Activated CD4-positive, alpha-beta T cell treated with anti-CD3 and anti-CD28 coated beads for 36 hours (primary cell): ENCODE measurements at regions of chr3 and their contacts with region 1.

Region 1: DNA sequence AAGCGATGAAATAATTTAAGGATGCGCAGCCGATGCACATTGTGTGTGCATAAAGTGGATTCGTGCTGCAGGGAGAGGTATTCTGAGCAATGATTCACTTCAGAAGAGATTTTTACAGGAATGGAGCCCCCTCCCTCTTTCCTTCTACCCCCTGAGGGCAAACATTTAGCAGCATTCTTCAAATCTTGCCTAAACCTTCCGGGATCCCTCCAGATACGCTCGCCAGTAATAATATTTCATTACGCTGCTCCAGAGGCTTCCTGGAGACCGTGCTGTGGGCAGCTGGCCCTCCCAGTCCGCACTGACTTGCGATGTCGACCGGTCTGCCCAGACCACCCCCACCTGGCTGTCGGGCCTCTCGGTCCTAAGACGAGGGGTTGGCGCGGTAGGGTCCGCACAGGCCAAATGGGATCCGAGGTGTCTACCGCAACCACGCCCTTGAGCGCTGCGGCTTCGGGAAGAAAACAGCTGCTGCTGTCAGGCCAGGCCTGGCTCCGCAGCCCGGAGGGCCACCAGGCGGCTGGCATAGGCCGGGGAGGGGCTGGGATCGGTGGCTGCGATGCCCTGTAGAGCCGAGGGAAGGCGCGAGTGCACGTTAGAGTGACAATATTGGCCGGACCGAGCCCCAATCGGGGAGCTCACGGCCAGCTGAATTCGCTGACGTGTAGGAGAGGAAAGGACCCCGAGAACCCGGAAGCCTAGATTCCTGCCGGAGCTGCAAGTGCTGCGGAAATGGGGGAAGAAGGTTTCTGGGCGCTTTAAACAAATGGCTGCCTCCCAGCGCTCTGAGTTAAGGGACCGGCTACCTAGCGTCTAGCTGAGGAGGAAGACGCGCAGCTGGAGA is 14.3 kb downstream of the ZIC4 start:
- DNase-seq: no peak
- ATAC-seq: no peak
- H3K4me3 Mint-ChIP-seq: no peak overlapping the region
- H3K27ac Mint-ChIP-seq: no peak overlapping the region
- H3K4me1 Mint-ChIP-seq: no peaks in the 10 kb centered on the region
- H3K27me3 Mint-ChIP-seq: peaks cover 78% of the 10 kb centered on the region

Region 2: GRCh38 chr3:147361454-147362420 is 30.3 kb before region 1 on chr3:
- CTCF ChIA-PET with region 1: no interaction called
- POLR2A ChIA-PET with region 1: no interaction called
- intact Hi-C with region 1: loop called in 1 of 2 experiments (anchors 5 kb)
- DNase-seq: peak; percentile 78
- ATAC-seq: no peak
- H3K4me3 Mint-ChIP-seq: no peak overlapping the region
- H3K27ac Mint-ChIP-seq: no peak overlapping the region
- H3K4me1 Mint-ChIP-seq: peaks cover 5% of the 10 kb centered on the region
- H3K27me3 Mint-ChIP-seq: peaks cover 57% of the 10 kb centered on the region

Region 3: DNA sequence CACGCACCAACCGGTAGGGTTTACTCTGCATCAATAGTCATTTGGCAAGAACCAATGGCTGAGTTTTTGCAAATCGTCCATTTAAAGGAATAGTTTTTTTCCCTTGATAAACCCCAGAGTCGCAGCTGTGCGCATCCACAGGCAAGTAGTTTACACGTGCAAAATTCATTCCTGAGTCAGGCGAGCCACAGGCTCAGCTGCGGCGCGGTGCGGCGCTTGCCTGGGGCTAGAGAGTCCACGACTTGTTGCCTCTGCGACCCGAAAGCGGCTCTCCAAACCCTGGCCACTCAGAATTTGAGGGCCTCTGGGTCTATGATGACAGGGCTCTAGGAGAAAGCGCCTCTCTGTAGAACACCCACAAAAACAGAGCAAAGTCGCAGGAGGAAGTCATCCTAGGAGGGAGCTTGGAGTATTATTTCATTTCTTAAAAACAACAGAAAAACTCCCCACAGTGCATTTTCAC is 22.3 kb before region 1 on chr3:
- CTCF ChIA-PET with region 1: no interaction called
- POLR2A ChIA-PET with region 1: no interaction called
- intact Hi-C with region 1: loop called in 1 of 2 experiments (anchors 1 kb)
- DNase-seq: no peak
- ATAC-seq: no peak
- H3K4me3 Mint-ChIP-seq: no peak overlapping the region
- H3K27ac Mint-ChIP-seq: no peak overlapping the region
- H3K4me1 Mint-ChIP-seq: no peaks in the 10 kb centered on the region
- H3K27me3 Mint-ChIP-seq: peaks cover 70% of the 10 kb centered on the region

Region 4: GRCh38 chr3:147410526-147411237 is 18.7 kb after region 1 on chr3:
- CTCF ChIA-PET with region 1: no interaction called
- POLR2A ChIA-PET with region 1: interaction called, 3 read pairs
- intact Hi-C with region 1: loop called (anchors 1 to 2 kb)
- DNase-seq: peak; percentile 31
- ATAC-seq: no peak
- H3K4me3 Mint-ChIP-seq: peak overlapping the region; percentile 54
- H3K27ac Mint-ChIP-seq: no peak overlapping the region
- H3K4me1 Mint-ChIP-seq: peaks cover 44% of the 10 kb centered on the region
- H3K27me3 Mint-ChIP-seq: peaks cover 73% of the 10 kb centered on the region